ENCODE measurements at regions of chr17 and their contacts with region 1.

Region 1: DNA sequence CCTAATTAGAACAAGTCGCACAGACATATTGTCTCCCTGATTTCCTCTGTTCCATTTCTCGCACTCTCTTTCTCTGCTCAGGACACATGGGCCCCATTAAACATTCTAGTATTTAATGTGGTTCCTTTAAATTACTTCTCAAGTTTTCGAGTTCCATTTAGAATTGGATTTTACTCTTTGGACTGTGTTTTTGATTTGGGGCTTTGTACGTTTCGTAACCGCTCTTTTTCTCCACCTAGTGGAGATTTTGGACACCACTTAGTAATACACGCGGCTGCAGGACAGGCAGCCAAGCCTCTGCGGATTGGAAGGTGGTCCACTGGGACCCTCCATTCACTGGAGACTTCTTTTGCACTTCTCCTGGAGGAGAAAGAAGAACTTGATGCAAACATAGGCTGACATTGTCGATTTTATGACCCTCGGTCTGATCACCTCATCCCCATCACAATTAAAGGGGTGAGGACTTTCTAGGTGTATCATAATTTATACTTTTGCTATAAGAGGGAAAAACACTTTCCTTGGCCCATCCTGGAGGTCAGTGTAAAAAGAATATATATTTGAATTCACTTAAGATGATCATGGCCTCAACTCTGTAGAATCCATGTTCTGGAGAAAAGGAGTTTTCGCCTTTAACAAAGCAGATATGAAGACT is 85.7 kb downstream of the NOG start:
- DNase-seq: peak; percentile 54
- H3K4me3 ChIP-seq: peak overlapping the region; percentile 19 to 58 (median 21)
- H3K27ac ChIP-seq: no peak overlapping the region
- H3K4me1 ChIP-seq: peaks cover 32% of the 10 kb centered on the region
- H3K27me3 ChIP-seq: peaks cover 27 to 38% of the 10 kb centered on the region in 2 experiments
- CTCF ChIP-seq: peak; percentile 60 to 61
- POLR2A ChIP-seq: no peak

Region 2: GRCh38 chr17:56290101-56290801 is 389.0 kb before region 1 on chr17:
- CTCF ChIA-PET with region 1: no interaction called
- POLR2A ChIA-PET with region 1: no interaction called
- dilution Hi-C with region 1: no loop called
- intact Hi-C with region 1: no loop called
- DNase-seq: peak; percentile 26
- H3K4me3 ChIP-seq: no peak overlapping the region
- H3K27ac ChIP-seq: no peak overlapping the region
- H3K4me1 ChIP-seq: peaks cover 25% of the 10 kb centered on the region
- H3K27me3 ChIP-seq: no peaks in the 10 kb centered on the region
- CTCF ChIP-seq: no peak
- POLR2A ChIP-seq: no peak

Region 3: DNA sequence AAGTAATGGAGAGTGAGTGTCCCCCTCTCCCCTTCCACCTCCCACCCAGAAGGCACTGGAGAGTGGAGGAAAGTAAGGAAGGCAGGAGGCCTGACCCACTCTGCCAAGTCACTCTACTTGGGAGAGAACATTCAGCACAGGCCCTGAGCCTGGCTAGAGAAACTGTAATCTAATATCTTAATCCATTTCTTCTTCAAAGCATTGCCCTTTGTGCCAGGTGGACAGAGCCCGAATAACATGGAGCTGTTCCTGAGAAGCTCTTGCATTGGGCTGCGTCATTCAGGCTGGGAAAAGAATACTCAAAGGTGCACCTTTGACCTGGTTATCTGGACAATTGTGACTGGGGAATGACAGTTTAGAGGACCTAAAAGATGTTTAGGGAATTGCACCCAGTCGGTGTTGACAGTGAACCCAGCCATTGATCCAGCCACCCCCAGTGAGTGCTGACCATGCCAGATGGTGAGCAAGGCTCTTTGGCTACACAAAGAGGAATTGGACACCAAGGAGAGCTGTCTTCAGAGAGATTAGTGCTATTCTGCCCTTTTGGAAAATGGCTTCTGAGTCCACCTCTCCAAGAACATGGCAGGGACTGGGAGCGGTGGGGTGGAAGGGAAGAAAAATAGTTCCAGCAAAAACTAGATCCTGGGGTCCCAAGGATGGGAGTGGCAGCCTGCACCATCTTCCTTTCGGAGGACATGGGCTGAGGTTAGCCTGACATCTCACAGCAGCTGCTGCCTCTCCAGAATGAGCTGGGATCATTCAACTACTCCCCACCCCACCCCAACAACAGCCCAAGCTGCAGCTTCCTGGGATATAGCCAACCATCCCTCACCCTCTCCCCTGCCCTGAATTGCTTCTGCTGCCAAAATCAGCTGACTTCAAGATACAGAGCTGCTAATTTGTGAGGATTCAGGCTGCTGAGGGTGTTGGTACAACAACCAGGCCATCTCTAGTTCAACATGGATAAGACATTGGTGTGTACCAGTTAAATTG is 97.3 kb before region 1 on chr17:
- CTCF ChIA-PET with region 1: no interaction called
- POLR2A ChIA-PET with region 1: no interaction called
- dilution Hi-C with region 1: no loop called
- intact Hi-C with region 1: no loop called
- DNase-seq: no peak
- H3K4me3 ChIP-seq: no peak overlapping the region
- H3K27ac ChIP-seq: no peak overlapping the region
- H3K4me1 ChIP-seq: no peaks in the 10 kb centered on the region
- H3K27me3 ChIP-seq: peaks cover 6 to 10% of the 10 kb centered on the region in 2 experiments
- CTCF ChIP-seq: no peak
- POLR2A ChIP-seq: no peak

Region 4: GRCh38 chr17:56699186-56699895 is 20.1 kb after region 1 on chr17:
- CTCF ChIA-PET with region 1: interaction called, 10 read pairs
- POLR2A ChIA-PET with region 1: interaction called, 6 read pairs
- dilution Hi-C with region 1: no loop called
- intact Hi-C with region 1: loop called (anchors 1 kb)
- DNase-seq: peak; percentile 56
- H3K4me3 ChIP-seq: no peak overlapping the region
- H3K27ac ChIP-seq: peak overlapping the region; percentile 88
- H3K4me1 ChIP-seq: peaks cover 18% of the 10 kb centered on the region
- H3K27me3 ChIP-seq: no peaks in the 10 kb centered on the region
- CTCF ChIP-seq: no peak
- POLR2A ChIP-seq: peak; percentile 42